K562 (cell line): ENCODE measurements at regions of chr18 and their contacts with region 1.

Region 1: DNA sequence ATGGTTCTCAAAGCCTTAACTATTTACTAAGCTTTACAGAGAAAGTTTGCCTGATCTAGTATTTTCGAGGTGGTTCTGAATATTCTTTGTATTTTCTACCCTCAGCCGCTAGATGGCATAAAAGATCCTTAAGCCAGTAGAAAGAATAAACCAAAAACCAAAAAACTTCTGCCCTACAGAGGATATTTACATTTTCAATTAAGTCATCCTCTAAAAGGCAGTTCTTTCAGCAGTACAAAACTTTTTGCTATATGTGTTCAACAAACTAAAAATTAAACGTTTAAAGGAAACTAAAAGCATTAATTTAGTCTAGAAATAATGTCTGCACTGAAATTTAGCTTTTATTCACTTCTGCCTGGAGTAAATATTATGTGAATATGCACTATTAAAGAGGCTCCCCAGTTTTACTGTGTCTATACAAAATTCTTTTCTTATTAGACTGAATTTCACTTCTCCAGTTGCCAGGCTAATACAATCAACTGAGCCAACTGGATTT is 297.5 kb downstream of the PIEZO2 start:
- DNase-seq: peak; percentile 44 to 70 (median 56)
- ATAC-seq: peak; percentile 69
- H3K4me3 ChIP-seq: no peak overlapping the region
- H3K27ac ChIP-seq: peak overlapping the region; percentile 6; the same call in 2 of the 3 replicates
- H3K4me1 ChIP-seq: no peaks in the 10 kb centered on the region
- H3K27me3 ChIP-seq: peaks cover 0 to 5% of the 10 kb centered on the region in 2 experiments; a peak in 1 of 5 replicates
- CTCF ChIP-seq: peak; percentile 61 to 89 (median 66); a peak in 5 of 6 replicates
- EP300 ChIP-seq: no peak; the same call in 1 of the 2 replicates
- POLR2A ChIP-seq: no peak
- RAD21 ChIP-seq: peak; percentile 84 to 90

Region 2: GRCh38 chr18:11040823-11041656 is 189.2 kb after region 1 on chr18:
- CTCF ChIA-PET with region 1: interaction called, 4 read pairs
- POLR2A ChIA-PET with region 1: no interaction called
- in situ Hi-C with region 1: no loop called
- intact Hi-C with region 1: loop called (anchors 1 kb)
- DNase-seq: peak; percentile 40 to 47 (median 42)
- ATAC-seq: peak; percentile 76
- H3K4me3 ChIP-seq: no peak overlapping the region
- H3K27ac ChIP-seq: no peak overlapping the region
- H3K4me1 ChIP-seq: no peaks in the 10 kb centered on the region
- H3K27me3 ChIP-seq: no peaks in the 10 kb centered on the region
- CTCF ChIP-seq: peak; percentile 54 to 69 (median 57)
- EP300 ChIP-seq: no peak
- POLR2A ChIP-seq: no peak
- RAD21 ChIP-seq: peak; percentile 37 to 50

Region 3: GRCh38 chr18:11149441-11150270 is 297.8 kb after region 1 on chr18 and contains the start of gene PIEZO2:
- CTCF ChIA-PET with region 1: interaction called, 10 read pairs
- POLR2A ChIA-PET with region 1: no interaction called
- in situ Hi-C with region 1: no loop called
- intact Hi-C with region 1: loop called (anchors 2 kb)
- DNase-seq: peak; percentile 2 to 36 (median 26)
- ATAC-seq: peak; percentile 38; the same call in 1 of the 3 replicates
- H3K4me3 ChIP-seq: no peak within 1 kb of the TSS
- H3K27ac ChIP-seq: no peak within 1 kb of the TSS
- H3K4me1 ChIP-seq: peaks cover 0 to 4% of the 10 kb centered on the region in 2 experiments; a peak in 1 of 5 replicates
- H3K27me3 ChIP-seq: peaks cover 6 to 42% of the 10 kb centered on the region in 2 experiments; a peak in 4 of 5 replicates
- CTCF ChIP-seq: no peak
- EP300 ChIP-seq: no peak
- POLR2A ChIP-seq: no peak
- RAD21 ChIP-seq: no peak
- polyA plus RNA-seq, gene PIEZO2: 3.3 to 4.1 TPM